Activated T-helper 1 cell treated with anti-CD3 and anti-CD28 coated beads, Interleukin-12 subunit alpha, Interleukin-12 subunit beta, Interleukin-2, Interleukin-4 antibody, amounts not matched to agents 30 ng/mL and 10 ng/mL and 1 ng/mL, durations not matched to agents 14 hours and 24 hours and 36 hours (primary cell): ENCODE measurements at regions of chr3 and their contacts with region 1.

Region 1: DNA sequence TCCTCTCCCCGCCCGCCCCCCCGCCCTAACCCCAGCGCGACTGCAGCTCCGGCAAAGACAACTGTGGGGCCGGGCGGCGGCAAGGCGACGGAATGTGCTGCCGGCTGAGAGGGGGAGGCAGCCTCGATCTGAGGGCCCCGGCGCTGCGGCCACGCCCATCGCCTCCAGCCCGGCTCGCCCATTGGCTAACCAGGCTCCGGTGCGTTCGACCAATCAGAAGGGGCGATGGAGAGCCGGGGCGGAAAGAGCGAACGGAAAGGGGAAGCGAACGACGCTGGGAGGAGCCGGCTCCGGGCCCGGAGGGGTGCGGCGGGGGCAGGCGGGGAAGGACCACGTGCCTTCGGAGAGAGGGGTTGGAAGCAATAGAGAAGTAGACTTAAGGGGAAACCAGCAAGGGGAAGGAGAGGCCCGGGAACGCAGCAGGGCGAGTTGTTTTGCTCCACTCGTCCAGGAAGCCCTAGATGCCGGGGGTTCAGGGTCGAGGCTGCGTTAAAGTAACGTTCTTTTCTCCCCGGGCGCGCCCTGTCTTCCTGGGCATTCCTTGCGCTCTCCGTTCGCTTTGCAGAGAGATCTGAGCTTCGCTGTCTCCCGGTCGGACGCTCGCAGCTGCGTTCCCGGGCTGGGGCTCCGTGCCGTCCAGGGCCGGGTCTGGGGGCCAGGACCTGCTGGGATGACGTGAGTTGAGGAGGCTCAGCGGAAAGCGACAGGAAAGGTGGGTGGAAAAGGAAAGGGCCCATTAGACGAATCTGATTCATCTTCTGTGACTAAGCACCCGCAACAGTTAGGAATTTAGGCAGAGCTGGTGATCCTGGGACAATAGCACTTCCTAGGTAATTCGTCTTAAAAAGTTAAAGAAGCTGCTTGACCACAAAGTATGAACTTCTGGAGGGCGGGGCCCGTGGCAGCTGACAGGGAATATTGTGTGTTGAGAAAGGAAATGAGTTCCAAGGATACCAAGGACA is at the start of gene KPNA4:
- DNase-seq: peak; percentile 96
- H3K4me3 Mint-ChIP-seq: peak within 1 kb of the TSS; percentile 97
- H3K27ac Mint-ChIP-seq: peak within 1 kb of the TSS; percentile 96
- H3K4me1 Mint-ChIP-seq: peaks cover 58% of the 10 kb centered on the region
- H3K27me3 Mint-ChIP-seq: no peaks in the 10 kb centered on the region
- total RNA-seq, gene KPNA4: 73.5 and 77.7 TPM in 2 replicates

Region 2: DNA sequence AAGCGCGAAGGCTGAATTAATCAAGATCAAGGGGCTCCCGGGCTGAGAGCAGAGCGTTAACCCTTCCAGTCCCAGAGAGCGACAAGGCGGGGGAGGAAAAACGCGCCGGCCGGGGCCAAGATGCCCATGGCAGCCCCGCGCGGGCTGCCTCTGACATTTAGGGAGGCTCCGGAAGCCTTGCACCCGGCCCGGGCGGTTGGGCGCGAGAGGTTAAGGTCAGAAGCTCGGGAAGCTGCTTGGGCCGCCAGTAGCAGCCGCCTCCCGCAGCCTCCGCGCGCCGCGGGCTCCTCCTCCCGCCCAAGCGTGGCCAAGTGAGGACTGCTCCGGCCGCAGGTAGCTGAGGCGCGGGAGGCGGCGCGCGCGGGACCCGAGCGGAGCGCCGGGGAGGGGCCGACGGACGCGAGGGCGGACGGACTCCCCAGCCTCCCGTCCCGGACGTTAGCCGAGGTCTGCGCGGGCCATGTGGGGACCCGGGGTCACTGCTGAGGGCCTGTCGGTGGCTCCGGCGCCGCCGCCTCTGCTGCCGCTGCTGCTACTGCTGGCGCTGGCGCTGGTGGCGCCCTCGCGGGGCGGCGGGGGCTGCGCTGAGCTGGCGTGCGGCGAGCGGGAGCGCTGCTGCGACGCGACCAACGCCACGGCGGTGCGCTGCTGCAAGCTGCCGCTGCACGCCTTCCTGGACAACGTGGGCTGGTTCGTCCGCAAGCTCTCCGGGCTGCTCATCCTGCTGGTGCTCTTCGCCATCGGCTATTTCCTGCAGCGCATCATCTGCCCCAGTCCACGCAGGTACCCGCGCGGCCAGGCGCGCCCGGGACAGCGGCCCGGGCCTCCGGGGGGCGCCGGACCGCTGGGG is 340.3 kb before region 1 on chr3 and contains the start of gene C3orf80:
- intact Hi-C with region 1: loop called (anchors 5 kb)
- DNase-seq: peak; percentile 37
- H3K4me3 Mint-ChIP-seq: peak within 1 kb of the TSS; percentile 77
- H3K27ac Mint-ChIP-seq: peak within 1 kb of the TSS; percentile 40
- H3K4me1 Mint-ChIP-seq: peaks cover 14% of the 10 kb centered on the region
- H3K27me3 Mint-ChIP-seq: peaks cover 66% of the 10 kb centered on the region
- total RNA-seq, gene C3orf80: 0.18 and 0.42 TPM in 2 replicates

Region 3: GRCh38 chr3:160449636-160450598 is 115.8 kb before region 1 on chr3 and contains the start of gene TRIM59:
- intact Hi-C with region 1: loop called (anchors 1 kb)
- DNase-seq: peak; percentile 97
- H3K4me3 Mint-ChIP-seq: peak within 1 kb of the TSS; percentile 95
- H3K27ac Mint-ChIP-seq: peak within 1 kb of the TSS; percentile 95
- H3K4me1 Mint-ChIP-seq: peaks cover 29% of the 10 kb centered on the region
- H3K27me3 Mint-ChIP-seq: peaks cover 6% of the 10 kb centered on the region
- total RNA-seq, gene TRIM59: 33.1 and 33.2 TPM in 2 replicates

Region 4: DNA sequence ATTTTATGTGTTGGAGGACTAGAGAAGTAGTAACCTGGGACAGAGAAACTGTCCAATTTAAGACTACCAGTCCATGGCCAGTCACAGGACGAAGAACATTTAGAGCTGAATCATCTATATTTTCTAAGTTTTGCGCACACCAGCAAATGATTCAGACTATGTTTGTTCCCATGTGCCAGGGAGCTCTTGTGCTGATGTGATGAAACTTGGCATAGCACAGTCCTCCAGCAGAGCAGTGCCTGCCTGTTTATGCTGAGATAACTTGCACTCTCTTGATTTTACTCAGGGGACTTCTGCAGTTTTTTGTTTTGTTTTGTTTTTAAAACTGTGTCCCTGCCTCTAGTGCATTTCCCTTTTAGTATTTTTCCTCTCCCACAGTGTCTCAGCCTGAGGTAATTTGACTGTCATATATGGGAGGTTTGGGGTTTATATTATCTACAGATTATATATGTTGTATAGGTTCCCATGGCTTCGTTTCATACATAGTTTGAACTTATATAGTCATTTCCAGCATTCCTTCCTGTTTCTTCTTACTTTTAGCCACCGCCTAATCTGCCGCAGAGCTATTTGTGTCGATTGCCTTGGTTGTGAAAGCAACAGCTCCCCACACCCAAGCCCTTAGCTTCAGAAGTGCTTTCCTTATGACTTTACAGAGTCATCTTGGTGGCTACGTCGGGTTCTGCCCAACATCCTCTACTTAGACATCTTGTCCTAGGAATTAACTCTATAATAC is 235.8 kb after region 1 on chr3:
- intact Hi-C with region 1: loop called (anchors 1 kb)
- DNase-seq: peak; percentile 70
- H3K4me3 Mint-ChIP-seq: peak overlapping the region; percentile 64
- H3K27ac Mint-ChIP-seq: peak overlapping the region; percentile 85
- H3K4me1 Mint-ChIP-seq: peaks cover 36% of the 10 kb centered on the region
- H3K27me3 Mint-ChIP-seq: peaks cover 12% of the 10 kb centered on the region

Region 5: DNA sequence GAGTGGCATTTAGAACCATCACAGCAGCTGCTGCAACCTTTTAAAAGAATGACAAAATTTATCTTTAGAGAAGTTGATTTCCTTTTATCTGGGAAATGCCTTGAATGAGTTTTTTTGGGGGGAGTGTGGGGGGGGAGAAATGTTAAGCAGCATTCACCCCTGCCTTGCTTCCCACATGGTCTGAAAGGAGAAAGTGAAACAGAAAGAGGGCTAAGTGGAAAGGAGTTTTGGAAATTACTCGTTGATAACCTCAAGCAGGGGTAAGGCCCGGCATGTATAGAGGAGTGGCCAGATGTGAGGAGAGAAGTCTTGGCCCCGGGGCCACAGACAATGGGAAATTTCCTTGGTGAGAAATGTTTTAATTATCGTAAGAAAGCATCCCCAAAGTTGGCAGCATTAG is 515.9 kb after region 1 on chr3:
- intact Hi-C with region 1: loop called (anchors 5 kb)
- DNase-seq: no peak
- H3K4me3 Mint-ChIP-seq: no peak overlapping the region
- H3K27ac Mint-ChIP-seq: no peak overlapping the region
- H3K4me1 Mint-ChIP-seq: peaks cover 43% of the 10 kb centered on the region
- H3K27me3 Mint-ChIP-seq: no peaks in the 10 kb centered on the region

Region 6: GRCh38 chr3:162262147-162262546 is 1696.4 kb after region 1 on chr3:
- intact Hi-C with region 1: no loop called
- DNase-seq: no peak
- H3K4me3 Mint-ChIP-seq: no peak overlapping the region
- H3K27ac Mint-ChIP-seq: no peak overlapping the region
- H3K4me1 Mint-ChIP-seq: no peaks in the 10 kb centered on the region
- H3K27me3 Mint-ChIP-seq: no peaks in the 10 kb centered on the region